Activated T-helper 2 cell treated with anti-CD3 and anti-CD28 coated beads, Interferon-gamma antibody, Interleukin-2, Interleukin-4, amounts not matched to agents 10 μg/mL and 5 μg/mL and 100 μg/mL, durations not matched to agents 14 hours and 24 hours and 36 hours (primary cell): ENCODE measurements at regions of chr6 and their contacts with region 1.

Region 1: GRCh38 chr6:165884813-165885765 is 222.0 kb upstream of the PDE10A start:
- DNase-seq: peak; percentile 38
- H3K4me3 Mint-ChIP-seq: no peak overlapping the region
- H3K27ac Mint-ChIP-seq: no peak overlapping the region
- H3K4me1 Mint-ChIP-seq: peaks cover 6% of the 10 kb centered on the region
- H3K27me3 Mint-ChIP-seq: peaks cover 5% of the 10 kb centered on the region

Region 2: DNA sequence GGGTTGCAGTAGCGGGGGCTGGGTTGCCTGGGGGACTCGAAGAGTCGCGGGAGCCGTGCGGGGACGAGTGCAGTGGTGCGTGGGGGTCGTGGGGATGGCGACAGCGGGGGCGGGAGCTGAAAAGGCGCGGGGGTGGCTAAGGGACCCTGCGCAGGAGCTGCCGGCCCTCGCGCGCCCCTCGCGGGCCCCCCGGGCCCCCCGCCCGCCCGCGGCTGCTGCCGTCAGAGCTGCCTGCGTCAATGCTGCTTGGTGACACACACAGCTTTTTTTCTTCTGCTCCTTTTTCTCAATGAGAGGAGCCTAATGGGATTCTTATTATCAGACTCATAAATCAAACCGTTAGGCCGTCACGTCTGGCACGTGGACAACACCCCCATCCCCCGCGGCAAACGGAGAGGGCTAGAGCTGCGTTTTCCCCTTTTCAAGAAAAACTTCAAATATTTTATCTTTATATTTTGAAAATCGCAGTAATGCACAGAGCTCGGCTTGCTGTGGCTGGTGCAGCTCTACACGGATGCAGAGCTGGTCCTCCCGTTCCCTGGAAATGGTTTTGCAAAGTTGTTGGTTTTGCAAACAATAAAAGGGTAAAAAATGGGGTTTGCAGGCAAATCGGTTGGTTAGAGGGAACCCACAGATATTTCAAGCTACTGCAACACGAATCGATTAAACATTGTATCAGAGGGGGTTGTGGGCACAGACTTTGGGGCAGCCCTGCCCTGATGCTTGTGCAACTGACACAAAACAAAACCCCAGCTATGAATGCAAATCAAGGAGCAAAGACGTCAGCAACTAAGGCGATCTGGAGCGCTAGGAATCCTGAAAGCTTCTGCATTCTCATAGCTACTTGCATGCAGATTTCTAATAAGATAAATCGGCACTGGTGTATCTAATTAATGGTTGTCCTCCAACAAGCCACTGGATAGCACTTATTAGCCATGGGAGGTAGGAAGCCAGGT is 121.1 kb after region 1 on chr6:
- intact Hi-C with region 1: no loop called
- DNase-seq: no peak
- H3K4me3 Mint-ChIP-seq: no peak overlapping the region
- H3K27ac Mint-ChIP-seq: no peak overlapping the region
- H3K4me1 Mint-ChIP-seq: no peaks in the 10 kb centered on the region
- H3K27me3 Mint-ChIP-seq: peaks cover 65% of the 10 kb centered on the region

Region 3: GRCh38 chr6:166097915-166098522 is 212.9 kb after region 1 on chr6:
- intact Hi-C with region 1: loop called (anchors 1 kb)
- DNase-seq: peak; percentile 28
- H3K4me3 Mint-ChIP-seq: no peak overlapping the region
- H3K27ac Mint-ChIP-seq: no peak overlapping the region
- H3K4me1 Mint-ChIP-seq: no peaks in the 10 kb centered on the region
- H3K27me3 Mint-ChIP-seq: peaks cover 15% of the 10 kb centered on the region

Region 4: DNA sequence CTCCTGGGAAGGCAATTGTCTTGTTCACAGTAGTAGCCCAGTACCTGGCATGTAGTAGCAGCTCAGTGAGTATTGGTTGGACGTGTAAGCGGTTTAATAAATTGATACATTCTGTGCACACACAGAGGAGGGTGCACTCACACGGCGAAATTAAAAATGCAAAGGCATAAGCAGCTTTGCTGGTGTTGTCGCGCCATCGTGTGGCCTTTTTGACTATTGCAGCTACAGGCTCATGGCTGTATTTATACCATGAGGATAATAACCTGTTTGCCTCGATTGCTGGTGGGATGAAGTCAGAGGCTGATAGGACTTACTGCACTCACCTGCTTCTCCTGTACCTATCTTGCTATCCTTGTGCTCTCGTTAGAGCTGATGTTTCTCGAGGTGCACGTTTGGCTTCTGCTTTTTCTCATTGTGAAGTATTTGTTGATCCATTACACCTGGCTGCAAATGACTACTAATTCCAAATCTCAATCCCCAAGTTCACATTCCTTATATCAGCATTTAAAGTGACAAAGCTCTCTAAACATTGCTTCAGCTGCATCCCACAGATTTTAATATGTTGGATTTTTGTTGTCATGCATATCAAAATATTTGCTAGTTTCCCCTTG is 221.1 kb after region 1 on chr6:
- intact Hi-C with region 1: loop called (anchors 1 kb)
- DNase-seq: peak; percentile 35
- H3K4me3 Mint-ChIP-seq: no peak overlapping the region
- H3K27ac Mint-ChIP-seq: no peak overlapping the region
- H3K4me1 Mint-ChIP-seq: peaks cover 3% of the 10 kb centered on the region
- H3K27me3 Mint-ChIP-seq: peaks cover 16% of the 10 kb centered on the region

Region 5: GRCh38 chr6:166167801-166168615 is 282.9 kb after region 1 on chr6 and contains the start of gene TBXT:
- intact Hi-C with region 1: loop called (anchors 10 kb)
- DNase-seq: no peak
- H3K4me3 Mint-ChIP-seq: peak within 1 kb of the TSS; percentile 38
- H3K27ac Mint-ChIP-seq: no peak within 1 kb of the TSS
- H3K4me1 Mint-ChIP-seq: peaks cover 5% of the 10 kb centered on the region
- H3K27me3 Mint-ChIP-seq: peaks cover 59% of the 10 kb centered on the region
- total RNA-seq, gene TBXT: not detected in 2 replicates